ENCODE measurements at regions of chr15 and their contacts with region 1.

Region 1: DNA sequence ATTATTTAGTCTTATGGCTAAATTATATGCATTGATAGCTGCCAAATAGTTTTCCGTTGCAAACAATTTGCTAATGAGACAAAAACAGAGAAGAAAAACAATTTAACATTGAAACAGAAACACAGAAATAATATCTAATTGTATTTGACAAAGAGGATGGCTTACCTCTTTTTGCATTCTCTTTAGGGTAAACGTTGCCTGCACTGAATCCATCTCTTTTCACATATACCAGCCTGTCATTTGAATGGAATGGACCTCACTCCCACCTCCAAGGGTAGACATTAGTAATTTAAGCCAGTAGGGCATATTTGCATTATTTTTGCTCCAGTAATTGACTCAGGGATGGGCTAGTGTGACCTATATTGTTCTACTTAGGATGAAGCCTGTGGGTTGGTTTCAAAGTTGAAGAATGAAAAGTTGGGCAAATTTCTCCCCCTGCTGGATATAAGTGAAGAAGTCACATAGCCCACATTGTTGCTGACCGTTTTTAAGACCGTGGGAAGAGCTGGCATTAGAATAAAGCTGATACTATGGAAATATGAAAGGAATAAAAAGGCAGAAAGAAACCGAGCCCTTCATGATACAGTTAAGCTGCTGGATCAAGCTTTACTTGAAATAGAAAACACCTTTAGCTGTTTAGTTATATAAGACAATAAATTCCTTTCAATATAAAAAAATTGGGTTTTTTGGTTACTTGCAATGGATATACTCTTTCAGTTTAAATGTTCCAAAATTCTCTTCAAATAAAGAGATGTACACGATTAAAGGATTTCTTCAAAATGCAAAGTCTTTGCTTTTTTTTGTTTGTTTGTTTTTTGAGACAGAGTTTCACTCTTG is 26.9 kb downstream of the PIERCE2 start:
- DNase-seq: no peak
- ATAC-seq: peak; percentile 62
- H3K4me3 Mint-ChIP-seq: no peak overlapping the region
- H3K27ac Mint-ChIP-seq: no peak overlapping the region
- H3K4me1 Mint-ChIP-seq: peaks cover 2% of the 10 kb centered on the region
- H3K27me3 Mint-ChIP-seq: no peaks in the 10 kb centered on the region
- CTCF ChIP-seq: peak; percentile 63

Region 2: GRCh38 chr15:55221090-55222011 is 213.9 kb before region 1 on chr15:
- CTCF ChIA-PET with region 1: interaction called, 9 read pairs
- POLR2A ChIA-PET with region 1: no interaction called
- intact Hi-C with region 1: loop called (anchors 10 kb)
- DNase-seq: peak; percentile 78
- ATAC-seq: peak; percentile 74
- H3K4me3 Mint-ChIP-seq: peak overlapping the region; percentile 47
- H3K27ac Mint-ChIP-seq: peak overlapping the region; percentile 95
- H3K4me1 Mint-ChIP-seq: peaks cover 77% of the 10 kb centered on the region
- H3K27me3 Mint-ChIP-seq: no peaks in the 10 kb centered on the region
- CTCF ChIP-seq: no peak

Region 3: GRCh38 chr15:55357774-55358173 is 77.4 kb before region 1 on chr15:
- CTCF ChIA-PET with region 1: interaction called, 18 read pairs
- POLR2A ChIA-PET with region 1: no interaction called
- intact Hi-C with region 1: no loop called
- DNase-seq: no peak
- ATAC-seq: no peak
- H3K4me3 Mint-ChIP-seq: no peak overlapping the region
- H3K27ac Mint-ChIP-seq: no peak overlapping the region
- H3K4me1 Mint-ChIP-seq: no peaks in the 10 kb centered on the region
- H3K27me3 Mint-ChIP-seq: no peaks in the 10 kb centered on the region
- CTCF ChIP-seq: no peak

Region 4: GRCh38 chr15:55389276-55389631 is 46.0 kb before region 1 on chr15:
- CTCF ChIA-PET with region 1: interaction called, 10 read pairs
- POLR2A ChIA-PET with region 1: no interaction called
- intact Hi-C with region 1: no loop called
- DNase-seq: no peak
- ATAC-seq: no peak
- H3K4me3 Mint-ChIP-seq: no peak overlapping the region
- H3K27ac Mint-ChIP-seq: no peak overlapping the region
- H3K4me1 Mint-ChIP-seq: peaks cover 10% of the 10 kb centered on the region
- H3K27me3 Mint-ChIP-seq: no peaks in the 10 kb centered on the region
- CTCF ChIP-seq: no peak

Region 5: GRCh38 chr15:55420171-55420866 is 14.9 kb before region 1 on chr15:
- CTCF ChIA-PET with region 1: interaction called, 15 read pairs
- POLR2A ChIA-PET with region 1: no interaction called
- intact Hi-C with region 1: no loop called
- DNase-seq: no peak
- ATAC-seq: no peak
- H3K4me3 Mint-ChIP-seq: no peak overlapping the region
- H3K27ac Mint-ChIP-seq: no peak overlapping the region
- H3K4me1 Mint-ChIP-seq: no peaks in the 10 kb centered on the region
- H3K27me3 Mint-ChIP-seq: no peaks in the 10 kb centered on the region
- CTCF ChIP-seq: no peak

Measured in activated CD8-positive, alpha-beta T cell treated with anti-CD3 and anti-CD28 coated beads for 36 hours (primary cell).